ENCODE measurements at regions of chr3 and their contacts with region 1.

Region 1: GRCh38 chr3:100893590-100893989 is 99.6 kb downstream of the ABI3BP start:
- DNase-seq: peak in 1 of 2 donors; percentile 51
- ATAC-seq: no peak
- H3K4me3 ChIP-seq: no peak overlapping the region
- H3K27ac ChIP-seq: no peak overlapping the region
- H3K4me1 ChIP-seq: no peaks in the 10 kb centered on the region
- H3K27me3 ChIP-seq: no peaks in the 10 kb centered on the region

Region 2: GRCh38 chr3:101195951-101196713 is 302.5 kb after region 1 on chr3:
- intact Hi-C with region 1: loop called (anchors 2 kb)
- DNase-seq: no peak
- ATAC-seq: peak; percentile 84
- H3K4me3 ChIP-seq: no peak overlapping the region
- H3K27ac ChIP-seq: no peak overlapping the region
- H3K4me1 ChIP-seq: no peaks in the 10 kb centered on the region
- H3K27me3 ChIP-seq: no peaks in the 10 kb centered on the region

Measured in aorta (tissue), 5 donors.